ENCODE measurements at regions of chr4 and their contacts with region 1.

Region 1: DNA sequence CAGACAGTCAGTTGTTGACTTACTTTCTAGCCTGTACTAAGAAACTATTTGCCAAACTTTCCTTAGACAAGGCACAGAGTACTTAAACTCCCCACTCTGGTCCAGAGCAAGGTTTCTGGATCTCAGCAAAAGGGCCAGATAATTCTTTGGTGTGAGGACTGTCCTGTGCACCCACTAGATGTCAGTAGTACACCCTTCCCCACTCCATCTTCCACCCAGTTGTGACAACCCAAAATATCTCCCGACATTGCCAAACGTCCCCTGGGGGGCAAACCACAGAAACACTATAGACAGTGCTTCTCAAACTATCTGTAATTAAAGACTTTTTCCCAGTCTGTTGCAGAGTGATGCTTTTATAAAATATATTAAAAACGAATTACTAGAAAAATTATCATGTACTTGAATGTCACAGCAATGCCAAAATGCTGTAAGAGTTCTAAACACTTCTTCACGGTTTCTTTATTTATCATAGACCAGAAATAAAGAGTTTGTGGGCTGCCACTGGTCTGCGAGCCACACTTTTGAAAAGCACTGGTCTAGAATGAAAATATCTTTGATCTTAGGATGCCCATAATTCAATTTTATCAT is 203.5 kb downstream of the PRDM5 start:
- DNase-seq: peak; percentile 41
- ATAC-seq: peak; percentile 53
- H3K4me3 Mint-ChIP-seq: no peak overlapping the region
- H3K27ac Mint-ChIP-seq: no peak overlapping the region
- H3K4me1 Mint-ChIP-seq: no peaks in the 10 kb centered on the region
- H3K27me3 Mint-ChIP-seq: peaks cover 11% of the 10 kb centered on the region

Region 2: GRCh38 chr4:120491481-120491880 is 227.6 kb before region 1 on chr4:
- CTCF ChIA-PET with region 1: no interaction called
- POLR2A ChIA-PET with region 1: no interaction called
- intact Hi-C with region 1: no loop called
- DNase-seq: no peak
- ATAC-seq: no peak
- H3K4me3 Mint-ChIP-seq: no peak overlapping the region
- H3K27ac Mint-ChIP-seq: no peak overlapping the region
- H3K4me1 Mint-ChIP-seq: no peaks in the 10 kb centered on the region
- H3K27me3 Mint-ChIP-seq: no peaks in the 10 kb centered on the region

Region 3: DNA sequence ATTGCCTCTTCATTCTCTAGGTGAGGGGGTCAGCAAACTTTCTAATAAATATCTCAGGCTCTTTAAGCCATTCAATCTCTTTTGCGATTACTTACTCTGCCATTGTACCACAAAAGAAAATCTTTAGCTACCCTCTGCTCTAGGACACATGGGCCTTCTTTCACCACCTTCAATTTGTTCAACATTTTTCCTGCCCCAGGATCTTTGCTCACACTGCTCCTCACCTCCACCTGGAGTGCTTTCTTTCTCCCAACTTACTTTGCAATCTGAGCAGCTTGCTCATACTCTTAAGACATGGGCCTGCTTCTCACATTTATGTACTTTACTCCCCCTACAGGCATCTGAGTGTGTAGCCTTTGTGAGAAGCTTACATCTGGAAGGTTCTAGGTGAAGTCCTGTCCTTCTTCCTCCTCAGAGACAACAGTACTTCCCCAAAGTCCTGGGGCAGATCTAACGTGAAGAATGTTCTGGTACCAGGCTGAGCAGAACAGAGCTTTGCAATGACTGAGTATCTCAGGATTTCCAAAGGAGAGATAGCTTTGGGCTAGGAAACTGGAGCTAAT is 258.4 kb after region 1 on chr4:
- CTCF ChIA-PET with region 1: interaction called, 5 read pairs
- POLR2A ChIA-PET with region 1: no interaction called
- intact Hi-C with region 1: loop called in 1 of 2 experiments (anchors 2 kb)
- DNase-seq: no peak
- ATAC-seq: peak; percentile 83
- H3K4me3 Mint-ChIP-seq: no peak overlapping the region
- H3K27ac Mint-ChIP-seq: no peak overlapping the region
- H3K4me1 Mint-ChIP-seq: peaks cover 5% of the 10 kb centered on the region
- H3K27me3 Mint-ChIP-seq: no peaks in the 10 kb centered on the region

Region 4: GRCh38 chr4:121096629-121097028 is 377.6 kb after region 1 on chr4:
- CTCF ChIA-PET with region 1: no interaction called
- POLR2A ChIA-PET with region 1: no interaction called
- intact Hi-C with region 1: loop called (anchors 1 kb)
- DNase-seq: no peak
- ATAC-seq: no peak
- H3K4me3 Mint-ChIP-seq: no peak overlapping the region
- H3K27ac Mint-ChIP-seq: no peak overlapping the region
- H3K4me1 Mint-ChIP-seq: no peaks in the 10 kb centered on the region
- H3K27me3 Mint-ChIP-seq: no peaks in the 10 kb centered on the region

Measured in activated CD4-positive, alpha-beta T cell treated with anti-CD3 and anti-CD28 coated beads for 36 hours (primary cell).